ENCODE measurements at regions of chr19 and their contacts with region 1.

Region 1: GRCh38 chr19:45016388-45017319 is 15.4 kb downstream of the RELB start:
- DNase-seq: peak; percentile 86
- H3K4me3 ChIP-seq: no peak overlapping the region
- H3K27ac ChIP-seq: no peak overlapping the region
- H3K4me1 ChIP-seq: no peaks in the 10 kb centered on the region
- H3K27me3 ChIP-seq: no peaks in the 10 kb centered on the region
- CTCF ChIP-seq: peak; percentile 76

Region 2: GRCh38 chr19:44912854-44913253 is 103.8 kb before region 1 on chr19:
- CTCF ChIA-PET with region 1: no interaction called
- POLR2A ChIA-PET with region 1: no interaction called
- intact Hi-C with region 1: no loop called
- DNase-seq: no peak
- H3K4me3 ChIP-seq: no peak overlapping the region
- H3K27ac ChIP-seq: no peak overlapping the region
- H3K4me1 ChIP-seq: peaks cover 12% of the 10 kb centered on the region
- H3K27me3 ChIP-seq: no peaks in the 10 kb centered on the region
- CTCF ChIP-seq: no peak

Region 3: GRCh38 chr19:45187421-45188100 is 170.9 kb after region 1 on chr19:
- CTCF ChIA-PET with region 1: interaction called, 6 read pairs
- POLR2A ChIA-PET with region 1: no interaction called
- intact Hi-C with region 1: loop called (anchors 10 kb)
- DNase-seq: peak; percentile 33
- H3K4me3 ChIP-seq: no peak overlapping the region
- H3K27ac ChIP-seq: no peak overlapping the region
- H3K4me1 ChIP-seq: no peaks in the 10 kb centered on the region
- H3K27me3 ChIP-seq: no peaks in the 10 kb centered on the region
- CTCF ChIP-seq: peak; percentile 62

Region 4: DNA sequence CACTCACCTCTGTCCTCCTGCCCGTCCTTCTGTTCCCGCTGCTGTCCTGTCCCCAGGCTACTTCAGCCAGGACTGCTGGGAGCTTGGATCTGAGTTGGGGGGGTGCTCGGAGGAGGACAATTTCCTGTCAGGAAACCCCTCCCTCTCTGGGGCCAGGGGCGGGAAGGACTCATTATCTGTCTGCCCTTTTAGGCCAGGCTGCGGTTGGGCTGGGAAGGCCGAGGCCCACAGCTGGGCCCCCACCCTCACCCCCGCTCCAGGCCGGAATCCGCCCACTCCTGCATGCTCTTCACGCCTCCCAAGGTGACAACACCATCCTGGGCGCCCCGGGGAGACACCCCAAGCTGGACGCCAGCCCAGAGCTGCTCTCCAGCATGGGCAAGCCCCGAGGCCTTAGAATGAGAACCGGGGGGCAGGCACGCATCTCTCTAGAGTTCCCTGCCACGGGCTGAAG is 228.7 kb after region 1 on chr19 and contains the start of gene EXOC3L2:
- CTCF ChIA-PET with region 1: no interaction called
- POLR2A ChIA-PET with region 1: no interaction called
- intact Hi-C with region 1: loop called (anchors 10 kb)
- DNase-seq: no peak
- H3K4me3 ChIP-seq: no peak within 1 kb of the TSS
- H3K27ac ChIP-seq: no peak within 1 kb of the TSS
- H3K4me1 ChIP-seq: peaks cover 5% of the 10 kb centered on the region
- H3K27me3 ChIP-seq: no peaks in the 10 kb centered on the region
- CTCF ChIP-seq: no peak
- total RNA-seq, gene EXOC3L2: not detected in 2 replicates

Region 5: DNA sequence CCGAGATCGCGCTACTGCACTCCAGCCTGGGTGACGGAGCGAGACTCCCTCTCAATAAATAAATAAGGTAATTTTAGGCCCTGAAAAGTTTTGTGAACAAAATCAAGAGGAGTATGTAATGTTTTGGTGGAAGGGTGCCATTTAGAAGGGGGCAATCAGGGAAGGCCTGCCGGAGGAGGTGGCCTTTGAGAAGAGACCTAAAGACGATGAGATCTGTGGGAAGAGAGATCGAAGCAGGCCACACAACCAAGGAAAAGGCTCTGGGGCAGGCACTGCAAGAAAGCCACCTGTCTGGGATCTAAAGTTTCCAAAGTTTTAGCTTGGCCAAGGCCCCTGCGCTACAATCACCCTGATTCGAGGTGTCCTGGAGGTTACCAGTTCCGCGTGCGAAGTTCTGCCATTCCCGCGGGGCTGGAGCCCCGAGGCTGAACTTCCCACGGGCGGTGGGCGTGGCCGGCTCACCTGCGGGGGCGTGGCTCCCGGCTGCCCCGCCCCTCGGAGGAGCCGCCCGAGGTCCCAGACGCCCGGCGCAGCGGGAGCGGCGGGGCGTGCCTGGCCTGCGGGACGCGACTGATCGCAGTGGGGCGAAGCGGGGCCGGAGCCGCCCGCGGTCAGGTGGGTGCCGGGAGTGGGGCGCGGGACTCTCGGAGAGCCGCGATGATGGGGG is 323.7 kb after region 1 on chr19 and contains the start of gene KLC3:
- CTCF ChIA-PET with region 1: no interaction called
- POLR2A ChIA-PET with region 1: no interaction called
- intact Hi-C with region 1: loop called (anchors 5 kb)
- DNase-seq: no peak
- H3K4me3 ChIP-seq: peak within 1 kb of the TSS; percentile 48
- H3K27ac ChIP-seq: no peak within 1 kb of the TSS
- H3K4me1 ChIP-seq: peaks cover 5% of the 10 kb centered on the region
- H3K27me3 ChIP-seq: no peaks in the 10 kb centered on the region
- CTCF ChIP-seq: no peak
- total RNA-seq, gene KLC3: 0.44 and 0.49 TPM in 2 replicates

Measured in A673 (cell line).